GM12878 (cell line): ENCODE measurements at regions of chr7 and their contacts with region 1.

Region 1: GRCh38 chr7:7761340-7761980 is 43.1 kb upstream of the RPA3 start:
- DNase-seq: no peak
- ATAC-seq: peak; percentile 70
- H3K4me3 ChIP-seq: peak overlapping the region; percentile 56
- H3K27ac ChIP-seq: peak overlapping the region; percentile 55
- H3K4me1 ChIP-seq: peaks cover 6% of the 10 kb centered on the region
- H3K27me3 ChIP-seq: no peaks in the 10 kb centered on the region
- CTCF ChIP-seq: peak in 2 of 3 experiments; percentile 32 to 50; a peak in 4 of 6 replicates
- EP300 ChIP-seq: no peak
- POLR2A ChIP-seq: no peak
- RAD21 ChIP-seq: peak; percentile 61

Region 2: DNA sequence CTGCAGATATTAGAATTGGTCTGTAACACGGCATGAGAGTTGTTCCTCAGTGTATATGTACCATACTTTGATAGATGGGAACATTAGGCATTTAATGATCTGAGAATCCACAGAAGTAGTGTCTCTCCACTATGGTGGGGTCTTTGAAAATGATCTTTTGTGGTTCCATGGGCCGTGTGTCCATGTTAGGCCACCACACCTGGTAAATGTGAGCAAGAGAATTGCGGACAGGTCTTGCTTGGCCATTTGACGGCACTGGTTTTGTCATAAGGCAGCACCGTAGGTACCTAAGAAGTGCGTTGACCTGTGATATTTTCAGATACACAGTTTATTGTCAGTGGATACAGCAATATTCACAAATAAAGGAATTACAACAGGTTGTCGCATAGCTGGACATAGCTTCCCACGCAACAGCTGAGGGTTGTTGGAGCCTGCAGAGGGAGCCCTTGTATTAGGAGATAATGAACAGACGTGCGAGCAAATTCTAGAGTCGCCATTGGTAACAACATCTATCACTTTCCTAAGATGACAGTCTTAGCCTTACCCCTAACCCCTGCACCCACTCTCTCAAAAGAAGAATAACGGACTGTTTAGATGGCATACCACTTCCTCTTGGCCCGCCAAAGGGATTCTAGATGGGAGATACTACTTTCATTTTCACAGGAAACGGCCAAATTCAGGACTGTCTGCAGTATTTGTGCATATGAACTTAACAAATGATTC is 337.1 kb before region 1 on chr7:
- CTCF ChIA-PET with region 1: interaction called, 3 read pairs
- POLR2A ChIA-PET with region 1: no interaction called
- RAD21 ChIA-PET with region 1: interaction called, 7 read pairs
- SMC1A ChIA-PET with region 1: interaction called, 4 read pairs
- in situ Hi-C with region 1: loop called (anchors 10 kb)
- intact Hi-C with region 1: loop called (anchors 2 kb)
- DNase-seq: peak; percentile 37
- ATAC-seq: peak; percentile 92
- H3K4me3 ChIP-seq: peak overlapping the region; percentile 41
- H3K27ac ChIP-seq: no peak overlapping the region
- H3K4me1 ChIP-seq: no peaks in the 10 kb centered on the region
- H3K27me3 ChIP-seq: no peaks in the 10 kb centered on the region
- CTCF ChIP-seq: peak; percentile 66 to 75 (median 66)
- EP300 ChIP-seq: no peak
- POLR2A ChIP-seq: no peak
- RAD21 ChIP-seq: peak; percentile 76

Region 3: GRCh38 chr7:7686811-7687508 is 74.5 kb before region 1 on chr7:
- CTCF ChIA-PET with region 1: interaction called, 179 read pairs
- POLR2A ChIA-PET with region 1: no interaction called
- RAD21 ChIA-PET with region 1: interaction called, 148 read pairs
- SMC1A ChIA-PET with region 1: interaction called, 218 read pairs
- in situ Hi-C with region 1: no loop called
- intact Hi-C with region 1: no loop called
- DNase-seq: no peak
- ATAC-seq: no peak
- H3K4me3 ChIP-seq: no peak overlapping the region
- H3K27ac ChIP-seq: no peak overlapping the region
- H3K4me1 ChIP-seq: no peaks in the 10 kb centered on the region; the same call in 1 of the 2 replicates
- H3K27me3 ChIP-seq: no peaks in the 10 kb centered on the region
- CTCF ChIP-seq: no peak
- EP300 ChIP-seq: no peak
- POLR2A ChIP-seq: no peak
- RAD21 ChIP-seq: no peak

Region 4: DNA sequence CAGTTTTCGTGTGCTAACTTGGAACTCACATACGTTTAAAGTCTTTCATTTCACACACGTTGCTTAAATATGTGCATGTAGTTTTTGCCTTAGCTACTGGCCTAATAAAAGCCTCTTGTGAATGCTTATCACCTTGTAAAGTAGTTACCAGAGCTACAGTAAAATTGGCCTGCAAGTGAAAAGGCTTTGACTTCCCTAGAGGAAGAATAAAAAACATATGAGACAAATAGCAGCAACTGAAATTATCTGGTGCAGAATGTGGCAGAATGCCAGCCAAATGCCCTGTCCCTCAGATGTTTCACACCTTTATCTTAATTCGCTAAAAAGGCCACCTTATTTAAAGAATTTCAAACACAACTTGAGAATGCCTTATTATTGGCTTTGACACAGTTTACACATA is 15.0 kb before region 1 on chr7:
- CTCF ChIA-PET with region 1: interaction called, 14 read pairs
- POLR2A ChIA-PET with region 1: interaction called, 3 read pairs
- RAD21 ChIA-PET with region 1: interaction called, 3 read pairs
- SMC1A ChIA-PET with region 1: interaction called, 16 read pairs
- in situ Hi-C with region 1: no loop called
- intact Hi-C with region 1: no loop called
- DNase-seq: no peak
- ATAC-seq: no peak
- H3K4me3 ChIP-seq: no peak overlapping the region
- H3K27ac ChIP-seq: no peak overlapping the region
- H3K4me1 ChIP-seq: no peaks in the 10 kb centered on the region
- H3K27me3 ChIP-seq: no peaks in the 10 kb centered on the region
- CTCF ChIP-seq: no peak
- EP300 ChIP-seq: no peak
- POLR2A ChIP-seq: no peak
- RAD21 ChIP-seq: no peak

Region 5: GRCh38 chr7:7808156-7808555 is 46.7 kb after region 1 on chr7:
- CTCF ChIA-PET with region 1: interaction called, 4 read pairs
- POLR2A ChIA-PET with region 1: interaction called, 3 read pairs
- RAD21 ChIA-PET with region 1: interaction called, 5 read pairs
- SMC1A ChIA-PET with region 1: interaction called, 18 read pairs
- in situ Hi-C with region 1: no loop called
- intact Hi-C with region 1: no loop called
- DNase-seq: no peak
- ATAC-seq: peak; percentile 87
- H3K4me3 ChIP-seq: no peak overlapping the region
- H3K27ac ChIP-seq: no peak overlapping the region
- H3K4me1 ChIP-seq: peaks cover 5% of the 10 kb centered on the region
- H3K27me3 ChIP-seq: no peaks in the 10 kb centered on the region
- CTCF ChIP-seq: no peak
- EP300 ChIP-seq: 0 out of 4 replicates have a peak, but pooled peaks of 1 of the 2 experiments have one; percentile 12
- POLR2A ChIP-seq: no peak
- RAD21 ChIP-seq: no peak

Region 6: DNA sequence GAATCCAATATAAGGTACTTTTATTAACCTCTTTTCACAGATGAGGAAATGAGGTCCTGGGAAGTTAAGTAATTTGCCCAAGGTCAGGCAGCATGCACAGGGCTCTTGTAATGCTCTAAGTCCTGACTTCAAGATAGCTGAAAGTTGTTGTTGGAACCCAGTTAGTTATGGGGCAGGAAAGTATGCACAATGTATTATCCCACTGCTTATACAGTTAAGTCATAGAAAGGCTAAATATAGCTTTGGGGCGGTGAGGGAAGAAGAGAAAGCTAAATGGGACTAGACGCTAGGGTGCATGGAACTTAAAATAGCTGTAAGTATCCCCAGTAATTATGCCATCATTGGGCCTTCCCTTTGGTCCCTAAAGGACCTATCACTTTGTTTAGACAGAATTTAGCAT is 216.3 kb after region 1 on chr7:
- CTCF ChIA-PET with region 1: interaction called, 6 read pairs
- POLR2A ChIA-PET with region 1: interaction called, 3 read pairs
- RAD21 ChIA-PET with region 1: interaction called, 20 read pairs
- SMC1A ChIA-PET with region 1: interaction called, 9 read pairs
- in situ Hi-C with region 1: no loop called
- intact Hi-C with region 1: no loop called
- DNase-seq: no peak
- ATAC-seq: peak; percentile 4
- H3K4me3 ChIP-seq: peak overlapping the region; percentile 47; the same call in 1 of the 2 replicates
- H3K27ac ChIP-seq: peak overlapping the region; percentile 30; the same call in 1 of the 2 replicates
- H3K4me1 ChIP-seq: peaks cover 4% of the 10 kb centered on the region; the same call in 1 of the 2 replicates
- H3K27me3 ChIP-seq: no peaks in the 10 kb centered on the region
- CTCF ChIP-seq: no peak
- EP300 ChIP-seq: no peak
- POLR2A ChIP-seq: no peak
- RAD21 ChIP-seq: no peak

Region 7: DNA sequence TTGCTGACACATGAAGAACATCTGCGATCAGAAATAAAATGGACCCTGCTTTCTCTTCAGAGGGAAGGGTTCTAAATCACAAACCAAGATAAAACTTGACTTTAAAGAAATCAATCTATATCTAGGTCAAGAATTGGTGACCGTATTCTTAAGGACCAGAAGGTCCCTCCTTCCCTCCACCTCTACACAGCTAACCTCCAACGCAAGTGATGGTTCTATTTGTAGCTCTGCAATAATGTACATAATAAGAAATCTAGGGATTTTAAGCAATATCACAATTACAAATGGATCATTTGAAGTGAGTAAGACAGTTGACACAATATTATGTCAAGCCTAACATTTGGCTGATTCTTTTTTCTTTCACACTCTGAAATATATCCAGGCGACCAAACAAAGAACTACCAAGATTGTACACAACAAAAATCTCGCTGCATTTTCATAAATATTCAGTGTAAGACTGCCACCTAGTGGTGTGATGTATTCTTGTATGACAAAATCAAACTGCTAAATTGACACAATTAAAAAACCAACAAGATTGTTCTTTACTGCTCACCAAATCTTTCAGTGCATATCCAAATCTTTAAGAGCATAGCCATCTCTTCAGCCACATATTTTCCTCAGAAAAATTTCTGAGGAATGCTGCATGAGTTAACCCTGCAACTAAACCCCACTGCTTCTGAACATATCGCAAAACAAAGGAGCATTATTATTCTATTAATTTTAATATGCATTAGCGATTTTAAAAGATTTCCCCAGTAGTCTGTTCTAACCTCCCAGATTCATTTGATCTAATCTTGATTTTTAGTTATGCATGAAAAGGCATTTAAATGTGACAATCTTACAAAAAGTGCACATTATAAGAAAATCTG is 456.0 kb after region 1 on chr7:
- CTCF ChIA-PET with region 1: interaction called, 28 read pairs
- POLR2A ChIA-PET with region 1: no interaction called
- RAD21 ChIA-PET with region 1: interaction called, 4 read pairs
- SMC1A ChIA-PET with region 1: interaction called, 5 read pairs
- in situ Hi-C with region 1: loop called (anchors 5 kb)
- intact Hi-C with region 1: loop called (anchors 5 kb)
- DNase-seq: peak; percentile 43
- ATAC-seq: peak; percentile 80
- H3K4me3 ChIP-seq: no peak overlapping the region
- H3K27ac ChIP-seq: no peak overlapping the region
- H3K4me1 ChIP-seq: no peaks in the 10 kb centered on the region
- H3K27me3 ChIP-seq: no peaks in the 10 kb centered on the region
- CTCF ChIP-seq: peak; percentile 42 to 67 (median 45); a peak in 4 of 6 replicates
- EP300 ChIP-seq: no peak
- POLR2A ChIP-seq: no peak
- RAD21 ChIP-seq: peak; percentile 81